SK-N-SH (cell line): ENCODE measurements at regions of chr1 and their contacts with region 1.

Region 1: DNA sequence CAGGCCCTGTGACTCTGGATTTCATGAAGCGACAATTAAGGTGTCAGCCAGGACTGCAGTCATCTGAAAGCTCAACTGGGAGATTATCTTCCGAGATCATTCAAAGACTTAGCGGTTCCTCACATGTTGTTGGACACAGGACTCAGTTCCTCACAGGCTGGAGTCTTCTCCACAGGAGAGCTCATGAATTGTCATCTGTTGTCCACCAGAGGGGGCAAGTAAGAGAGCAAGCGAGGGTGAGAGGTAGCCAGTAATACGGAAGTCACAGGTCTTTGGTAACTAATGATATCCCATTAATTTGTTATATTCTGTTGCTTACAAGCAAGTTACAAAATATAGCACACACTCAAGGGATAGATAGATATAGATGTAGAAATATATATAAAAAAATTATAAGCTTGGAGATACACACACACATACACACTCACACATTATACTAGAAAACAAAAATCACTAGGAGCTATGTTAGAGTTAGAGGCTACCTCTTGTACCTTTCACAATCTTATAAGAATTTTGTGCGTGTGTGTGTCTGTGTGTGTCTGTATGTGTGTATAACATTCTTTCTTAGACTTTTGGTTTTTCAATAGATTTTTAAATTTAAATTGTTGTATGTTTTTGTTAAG is 1695.3 kb downstream of the BRINP3 start:
- DNase-seq: peak; percentile 42
- H3K4me3 ChIP-seq: no peak overlapping the region
- H3K27ac ChIP-seq: no peak overlapping the region
- H3K4me1 ChIP-seq: no peaks in the 10 kb centered on the region
- H3K27me3 ChIP-seq: no peaks in the 10 kb centered on the region
- CTCF ChIP-seq: peak; percentile 67
- EP300 ChIP-seq: no peak
- RAD21 ChIP-seq: peak; percentile 76

Region 2: DNA sequence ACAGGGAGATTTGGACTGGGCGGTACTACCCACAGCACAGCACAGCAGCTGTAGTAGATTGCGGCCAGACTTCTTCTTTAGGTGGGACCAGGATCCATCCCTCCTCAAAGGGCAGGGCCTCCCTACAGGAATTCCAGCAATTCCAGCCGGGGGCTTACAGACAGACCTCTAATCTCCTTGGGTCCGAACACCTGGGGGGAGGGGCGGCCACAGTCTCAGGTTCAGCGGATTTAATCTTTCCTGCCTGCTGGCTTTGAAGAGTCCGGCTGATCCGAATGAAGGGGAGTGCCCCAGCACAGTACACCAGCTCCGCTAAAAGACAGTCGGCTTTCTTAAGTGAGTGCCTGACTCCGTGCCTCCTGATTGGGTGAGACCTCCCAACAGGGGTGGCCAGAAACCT is 13.1 kb before region 1 on chr1:
- CTCF ChIA-PET with region 1: interaction called, 16 read pairs
- POLR2A ChIA-PET with region 1: no interaction called
- DNase-seq: no peak
- H3K4me3 ChIP-seq: no peak overlapping the region
- H3K27ac ChIP-seq: no peak overlapping the region
- H3K4me1 ChIP-seq: no peaks in the 10 kb centered on the region; a peak in 1 of 4 replicates
- H3K27me3 ChIP-seq: no peaks in the 10 kb centered on the region
- CTCF ChIP-seq: no peak
- EP300 ChIP-seq: no peak
- RAD21 ChIP-seq: no peak

Region 3: DNA sequence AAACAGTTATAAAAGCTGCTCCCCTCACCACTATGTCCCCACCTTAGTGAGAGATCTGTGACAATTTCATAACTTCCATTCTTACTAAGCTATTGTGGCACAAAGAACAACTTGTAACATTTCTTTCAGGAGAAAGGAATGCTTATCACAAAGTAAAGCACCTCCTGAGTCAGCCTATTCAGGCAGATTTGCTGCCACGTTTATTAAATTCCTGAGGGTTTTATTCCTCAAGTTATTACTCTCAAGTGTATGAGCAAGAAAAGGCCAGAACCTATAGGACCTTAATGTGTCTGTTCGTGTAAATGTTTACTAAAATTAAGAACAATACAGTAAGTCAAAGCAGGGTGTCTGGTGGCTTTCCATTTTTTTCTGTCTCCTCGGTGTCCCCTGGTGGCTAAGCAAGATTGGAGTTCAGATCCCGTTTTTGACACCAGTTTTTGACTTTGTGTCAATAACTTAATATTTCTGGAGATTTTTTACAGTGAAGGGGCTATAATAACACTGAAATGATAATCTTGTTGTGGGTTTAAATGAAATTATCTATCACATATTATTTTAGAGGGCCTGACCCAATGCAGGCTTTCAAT is 155.7 kb after region 1 on chr1:
- CTCF ChIA-PET with region 1: interaction called, 14 read pairs
- POLR2A ChIA-PET with region 1: no interaction called
- DNase-seq: no peak
- H3K4me3 ChIP-seq: no peak overlapping the region
- H3K27ac ChIP-seq: no peak overlapping the region
- H3K4me1 ChIP-seq: no peaks in the 10 kb centered on the region
- H3K27me3 ChIP-seq: no peaks in the 10 kb centered on the region
- CTCF ChIP-seq: peak; percentile 56
- EP300 ChIP-seq: no peak
- RAD21 ChIP-seq: peak; percentile 63

Region 4: GRCh38 chr1:188958451-188959115 is 176.3 kb after region 1 on chr1:
- CTCF ChIA-PET with region 1: no interaction called
- POLR2A ChIA-PET with region 1: no interaction called
- DNase-seq: no peak
- H3K4me3 ChIP-seq: no peak overlapping the region
- H3K27ac ChIP-seq: no peak overlapping the region
- H3K4me1 ChIP-seq: no peaks in the 10 kb centered on the region
- H3K27me3 ChIP-seq: no peaks in the 10 kb centered on the region
- CTCF ChIP-seq: no peak
- EP300 ChIP-seq: no peak
- RAD21 ChIP-seq: no peak